ENCODE measurements at regions of chr15 and their contacts with region 1.

Region 1: GRCh38 chr15:91867581-91868026 is 14.1 kb downstream of the SLCO3A1 start:
- DNase-seq: peak in 1 of 3 donors; percentile 45
- H3K4me3 ChIP-seq: no peak overlapping the region
- H3K4me3 Mint-ChIP-seq: no peak overlapping the region
- H3K27ac ChIP-seq: no peak overlapping the region
- H3K27ac Mint-ChIP-seq: peak overlapping the region; percentile 33 to 75 (median 53)
- H3K4me1 ChIP-seq: peaks cover 73 to 79% of the 10 kb centered on the region in 2 donors
- H3K4me1 Mint-ChIP-seq: peaks cover 89% of the 10 kb centered on the region
- H3K27me3 ChIP-seq: no peaks in the 10 kb centered on the region
- H3K27me3 Mint-ChIP-seq: no peaks in the 10 kb centered on the region
- CTCF ChIP-seq: no peak

Region 2: GRCh38 chr15:91589356-91589755 is 278.2 kb before region 1 on chr15:
- intact Hi-C with region 1: no loop called
- DNase-seq: no peak
- H3K4me3 ChIP-seq: no peak overlapping the region
- H3K4me3 Mint-ChIP-seq: no peak overlapping the region
- H3K27ac ChIP-seq: no peak overlapping the region
- H3K27ac Mint-ChIP-seq: no peak overlapping the region
- H3K4me1 ChIP-seq: no peaks in the 10 kb centered on the region
- H3K4me1 Mint-ChIP-seq: peaks cover 8% of the 10 kb centered on the region
- H3K27me3 ChIP-seq: no peaks in the 10 kb centered on the region
- H3K27me3 Mint-ChIP-seq: peaks cover 0 to 3% (median 0%) of the 10 kb centered on the region in 3 donors
- CTCF ChIP-seq: no peak

Region 3: DNA sequence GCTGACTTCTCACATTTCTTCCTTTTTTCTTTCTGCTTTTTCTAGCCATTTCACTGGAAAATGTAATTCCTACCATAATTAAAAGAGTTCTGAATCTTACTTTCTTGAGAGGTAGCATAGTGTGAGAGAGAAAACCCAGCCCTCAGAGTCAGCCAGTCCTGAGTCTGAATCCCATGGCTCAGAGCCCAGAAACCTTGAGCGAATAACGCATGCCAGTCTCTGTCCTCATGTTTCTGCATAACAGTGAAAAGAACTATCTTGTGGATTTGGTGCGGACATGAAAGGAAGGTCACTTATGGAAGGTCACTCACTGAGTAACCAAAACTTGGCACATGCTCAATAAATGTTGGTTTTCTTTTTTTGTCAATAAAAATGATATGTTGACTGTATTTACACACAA is 43.3 kb before region 1 on chr15:
- intact Hi-C with region 1: no loop called
- DNase-seq: no peak
- H3K4me3 ChIP-seq: no peak overlapping the region
- H3K4me3 Mint-ChIP-seq: no peak overlapping the region
- H3K27ac ChIP-seq: no peak overlapping the region
- H3K27ac Mint-ChIP-seq: no peak overlapping the region
- H3K4me1 ChIP-seq: no peaks in the 10 kb centered on the region
- H3K4me1 Mint-ChIP-seq: no peaks in the 10 kb centered on the region
- H3K27me3 ChIP-seq: no peaks in the 10 kb centered on the region
- H3K27me3 Mint-ChIP-seq: peaks cover 0 to 2% (median 2%) of the 10 kb centered on the region in 3 donors
- CTCF ChIP-seq: no peak

Region 4: DNA sequence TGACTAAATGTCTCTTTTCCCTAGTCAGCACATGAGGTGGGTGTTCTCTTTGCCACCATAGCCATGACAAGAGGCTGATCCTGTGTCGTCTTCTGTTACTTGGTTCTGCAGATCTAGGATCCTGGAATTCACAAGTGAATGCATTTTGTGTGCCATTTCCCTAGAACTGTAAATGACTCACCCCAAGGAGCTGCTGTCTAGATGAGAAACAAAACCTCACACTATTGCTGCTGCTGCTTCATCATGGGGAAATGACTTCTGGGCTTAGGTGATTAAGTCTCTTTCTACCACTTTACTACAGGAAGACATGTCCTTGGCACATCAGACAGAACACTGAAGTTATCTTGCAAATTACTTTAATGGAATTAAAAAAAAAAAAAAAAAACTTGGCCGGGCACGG is 40.8 kb after region 1 on chr15:
- intact Hi-C with region 1: loop called (anchors 5 to 10 kb)
- DNase-seq: peak; percentile 29 to 74 (median 30)
- H3K4me3 ChIP-seq: no peak overlapping the region
- H3K4me3 Mint-ChIP-seq: no peak overlapping the region
- H3K27ac ChIP-seq: peak overlapping the region in 1 of 2 donors; percentile 37
- H3K27ac Mint-ChIP-seq: peak overlapping the region in 5 of 7 donors; percentile 2 to 66 (median 27)
- H3K4me1 ChIP-seq: peaks cover 14 to 19% of the 10 kb centered on the region in 2 donors
- H3K4me1 Mint-ChIP-seq: peaks cover 39% of the 10 kb centered on the region
- H3K27me3 ChIP-seq: no peaks in the 10 kb centered on the region
- H3K27me3 Mint-ChIP-seq: peaks cover 0 to 2% (median 1%) of the 10 kb centered on the region in 3 donors
- CTCF ChIP-seq: no peak

Region 5: GRCh38 chr15:91921188-91921842 is 53.7 kb after region 1 on chr15:
- intact Hi-C with region 1: loop called in 1 of 2 experiments (anchors 10 kb)
- DNase-seq: peak; percentile 88 to 94 (median 94)
- H3K4me3 ChIP-seq: peak overlapping the region in 1 of 3 experiments; percentile 37
- H3K4me3 Mint-ChIP-seq: peak overlapping the region; percentile 68 to 77
- H3K27ac ChIP-seq: peak overlapping the region; percentile 91 to 97
- H3K27ac Mint-ChIP-seq: peak overlapping the region; percentile 95 to 100 (median 99)
- H3K4me1 ChIP-seq: peaks cover 21 to 23% of the 10 kb centered on the region in 2 donors
- H3K4me1 Mint-ChIP-seq: peaks cover 42% of the 10 kb centered on the region
- H3K27me3 ChIP-seq: no peaks in the 10 kb centered on the region
- H3K27me3 Mint-ChIP-seq: no peaks in the 10 kb centered on the region
- CTCF ChIP-seq: no peak

Region 6: DNA sequence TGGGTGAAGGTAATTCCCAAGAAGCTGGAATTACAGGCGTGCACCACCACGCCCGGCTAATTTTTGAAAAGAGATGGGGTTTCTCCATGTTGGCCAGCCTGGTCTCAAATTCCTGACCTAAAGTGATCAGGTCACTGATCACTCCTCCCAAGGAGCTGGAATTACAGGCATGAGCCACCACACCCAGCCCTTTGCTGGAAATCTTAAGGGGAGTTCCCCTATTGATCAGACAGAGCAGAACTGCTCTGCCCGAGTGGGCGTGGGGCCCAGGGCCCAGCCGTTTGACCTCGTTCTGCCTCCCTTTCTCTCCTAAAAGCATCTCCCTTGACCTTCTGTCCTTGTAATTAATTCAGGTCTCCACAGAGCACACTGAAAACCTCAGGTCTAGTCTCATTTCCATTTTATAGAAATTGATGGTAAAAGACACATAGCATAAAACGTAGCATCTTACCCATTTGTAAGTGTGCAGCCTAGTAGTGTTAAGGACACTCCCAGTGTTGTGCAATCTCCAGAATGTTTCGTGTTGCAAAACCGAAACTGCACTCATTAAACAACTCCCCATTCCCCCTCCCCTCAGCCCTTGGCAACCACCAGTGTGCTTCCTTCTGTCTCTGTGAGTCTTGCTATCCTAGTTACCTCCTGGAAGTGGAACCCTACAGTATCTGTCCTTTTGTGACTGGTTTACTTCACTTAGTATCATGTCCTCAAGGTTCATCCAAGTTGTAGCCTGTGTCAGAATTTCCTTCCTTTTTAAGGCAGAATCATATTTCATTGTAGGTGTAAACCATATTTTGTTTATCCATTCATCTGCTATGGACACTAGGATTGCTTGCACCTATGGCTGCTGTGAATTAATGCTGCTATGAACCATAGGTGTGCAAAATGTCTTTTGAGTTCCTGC is 75.3 kb after region 1 on chr15:
- intact Hi-C with region 1: loop called in 1 of 2 experiments (anchors 5 kb)
- DNase-seq: peak; percentile 96 to 99 (median 99)
- H3K4me3 ChIP-seq: peak overlapping the region in 1 of 3 experiments; percentile 62
- H3K4me3 Mint-ChIP-seq: peak overlapping the region; percentile 56 to 86
- H3K27ac ChIP-seq: peak overlapping the region; percentile 93 to 95
- H3K27ac Mint-ChIP-seq: peak overlapping the region; percentile 93 to 99 (median 98)
- H3K4me1 ChIP-seq: peaks cover 85 to 96% of the 10 kb centered on the region in 2 donors
- H3K4me1 Mint-ChIP-seq: peaks cover 92% of the 10 kb centered on the region
- H3K27me3 ChIP-seq: no peaks in the 10 kb centered on the region
- H3K27me3 Mint-ChIP-seq: peaks cover 0 to 2% (median 0%) of the 10 kb centered on the region in 3 donors
- CTCF ChIP-seq: no peak

Measured in CD14-positive monocyte (primary cell).